Left colon (tissue), 2 donors: ENCODE measurements at regions of chr17 and their contacts with region 1.

Region 1: GRCh38 chr17:3004133-3004801 is 59.1 kb downstream of the OR1D5 start:
- DNase-seq: peak; percentile 98 to 99
- ATAC-seq: peak; percentile 91

Region 2: DNA sequence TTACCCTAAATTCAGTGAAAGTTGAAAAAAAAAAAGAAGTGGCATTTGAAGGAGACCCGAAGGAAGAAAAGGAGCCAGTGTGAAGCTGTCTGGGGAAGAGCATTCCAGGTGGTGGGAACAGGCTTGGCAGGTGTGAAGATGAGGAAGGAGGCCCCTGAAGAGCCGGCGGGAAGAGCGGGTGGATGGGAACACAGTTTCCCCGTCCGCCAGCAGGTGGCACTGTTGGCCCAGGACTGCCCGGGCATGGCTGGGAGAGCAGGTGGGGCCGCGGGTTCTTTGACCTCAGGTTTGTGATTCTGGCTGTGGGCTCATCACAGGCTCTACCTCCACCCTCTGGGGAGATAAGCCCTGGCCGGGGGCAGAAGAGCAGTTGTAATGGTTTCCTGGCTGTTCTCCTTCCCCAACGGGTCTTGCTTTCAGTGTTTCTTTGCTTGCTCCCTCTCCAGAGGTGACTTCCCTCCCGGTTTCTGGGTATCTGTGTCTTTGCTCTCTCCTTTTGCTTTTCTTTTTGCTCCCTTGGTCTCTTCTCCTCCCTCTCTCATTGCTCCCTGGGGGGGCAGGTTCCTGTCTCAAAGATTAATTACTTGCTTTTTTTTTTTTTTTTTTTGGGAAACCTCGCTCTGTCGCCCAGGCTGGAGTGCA is 175.7 kb before region 1 on chr17:
- intact Hi-C with region 1: loop called in 1 of 2 experiments (anchors 10 kb)
- DNase-seq: peak; percentile 65 to 85
- ATAC-seq: peak; percentile 95

Region 3: DNA sequence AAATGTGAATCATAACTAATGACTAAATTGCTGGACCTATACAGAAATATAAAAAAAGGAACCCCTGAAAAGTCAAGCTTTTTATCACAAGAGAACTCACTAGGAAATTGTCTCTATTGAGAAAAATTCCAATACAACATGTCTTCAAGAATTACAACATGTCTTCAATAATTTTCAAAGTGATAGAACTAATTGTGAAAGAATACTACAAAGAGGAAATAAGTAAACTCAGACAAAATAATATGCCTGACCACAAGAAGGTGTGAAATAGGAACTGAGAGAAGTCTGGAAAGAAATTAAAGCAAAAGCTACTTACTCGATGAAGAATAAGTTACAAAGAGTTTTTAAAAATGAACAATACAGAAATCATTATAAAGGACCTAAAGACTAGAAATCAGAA is 153.0 kb after region 1 on chr17:
- intact Hi-C with region 1: no loop called
- DNase-seq: no peak
- ATAC-seq: no peak